Activated T-helper 2 cell treated with anti-CD3 and anti-CD28 coated beads, Interferon-gamma antibody, Interleukin-2, Interleukin-4, amounts not matched to agents 10 μg/mL and 5 μg/mL and 100 μg/mL, durations not matched to agents 14 hours and 24 hours and 36 hours (primary cell): ENCODE measurements at regions of chr17 and their contacts with region 1.

Region 1: GRCh38 chr17:35242805-35243560 is at the start of gene SLFN5:
- DNase-seq: peak; percentile 91
- H3K4me3 Mint-ChIP-seq: peak within 1 kb of the TSS; percentile 96
- H3K27ac Mint-ChIP-seq: peak within 1 kb of the TSS; percentile 96
- H3K4me1 Mint-ChIP-seq: peaks cover 63% of the 10 kb centered on the region
- H3K27me3 Mint-ChIP-seq: no peaks in the 10 kb centered on the region
- total RNA-seq, gene SLFN5: 8.8 and 9.9 TPM in 2 replicates

Region 2: GRCh38 chr17:35051183-35051578 is 191.8 kb before region 1 on chr17:
- intact Hi-C with region 1: no loop called
- DNase-seq: peak; percentile 30
- H3K4me3 Mint-ChIP-seq: peak overlapping the region; percentile 49
- H3K27ac Mint-ChIP-seq: peak overlapping the region; percentile 81
- H3K4me1 Mint-ChIP-seq: peaks cover 59% of the 10 kb centered on the region
- H3K27me3 Mint-ChIP-seq: no peaks in the 10 kb centered on the region

Region 3: DNA sequence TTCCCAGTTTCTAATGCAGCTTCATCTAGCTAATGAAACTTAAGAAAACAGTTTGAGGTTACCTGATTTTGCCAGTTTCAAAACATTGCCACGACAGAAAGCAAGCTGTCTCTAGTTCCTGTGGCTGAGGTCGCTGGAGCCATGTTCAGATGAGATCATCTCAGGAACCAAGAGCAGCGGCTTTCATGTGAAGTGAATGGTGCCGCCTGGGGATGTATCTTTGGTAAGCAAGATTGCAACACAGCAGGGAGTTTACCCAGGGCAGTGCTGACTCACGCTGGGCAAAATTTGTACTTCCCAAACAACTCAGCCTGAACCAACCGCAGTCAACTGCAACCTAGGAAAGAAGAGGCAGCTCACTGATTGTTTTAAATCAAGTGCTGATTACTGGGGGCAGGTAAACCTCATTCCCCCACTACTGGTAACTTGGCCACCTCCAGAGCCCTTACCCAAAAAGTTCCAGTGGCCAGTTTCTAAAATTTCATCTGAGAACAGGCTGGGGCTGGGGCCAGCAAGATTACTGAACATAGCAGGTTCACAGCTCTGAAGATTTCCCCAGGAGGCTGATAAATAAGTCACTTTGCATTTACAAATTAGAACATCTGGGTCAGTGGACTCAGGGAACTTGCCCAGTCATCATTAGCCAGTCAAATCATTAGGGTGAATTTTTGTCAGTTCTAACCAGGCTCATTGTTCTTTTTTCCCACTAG is 179.3 kb before region 1 on chr17 and contains the start of gene RFFL:
- intact Hi-C with region 1: loop called (anchors 10 kb)
- DNase-seq: peak; percentile 84
- H3K4me3 Mint-ChIP-seq: peak within 1 kb of the TSS; percentile 5
- H3K27ac Mint-ChIP-seq: peak within 1 kb of the TSS; percentile 75
- H3K4me1 Mint-ChIP-seq: peaks cover 49% of the 10 kb centered on the region
- H3K27me3 Mint-ChIP-seq: no peaks in the 10 kb centered on the region
- total RNA-seq, gene RFFL: 21.3 and 25.4 TPM in 2 replicates

Region 4: GRCh38 chr17:35161281-35161761 is 81.7 kb before region 1 on chr17:
- intact Hi-C with region 1: no loop called
- DNase-seq: peak; percentile 18
- H3K4me3 Mint-ChIP-seq: peak overlapping the region; percentile 10
- H3K27ac Mint-ChIP-seq: peak overlapping the region; percentile 13
- H3K4me1 Mint-ChIP-seq: peaks cover 26% of the 10 kb centered on the region
- H3K27me3 Mint-ChIP-seq: no peaks in the 10 kb centered on the region

Region 5: DNA sequence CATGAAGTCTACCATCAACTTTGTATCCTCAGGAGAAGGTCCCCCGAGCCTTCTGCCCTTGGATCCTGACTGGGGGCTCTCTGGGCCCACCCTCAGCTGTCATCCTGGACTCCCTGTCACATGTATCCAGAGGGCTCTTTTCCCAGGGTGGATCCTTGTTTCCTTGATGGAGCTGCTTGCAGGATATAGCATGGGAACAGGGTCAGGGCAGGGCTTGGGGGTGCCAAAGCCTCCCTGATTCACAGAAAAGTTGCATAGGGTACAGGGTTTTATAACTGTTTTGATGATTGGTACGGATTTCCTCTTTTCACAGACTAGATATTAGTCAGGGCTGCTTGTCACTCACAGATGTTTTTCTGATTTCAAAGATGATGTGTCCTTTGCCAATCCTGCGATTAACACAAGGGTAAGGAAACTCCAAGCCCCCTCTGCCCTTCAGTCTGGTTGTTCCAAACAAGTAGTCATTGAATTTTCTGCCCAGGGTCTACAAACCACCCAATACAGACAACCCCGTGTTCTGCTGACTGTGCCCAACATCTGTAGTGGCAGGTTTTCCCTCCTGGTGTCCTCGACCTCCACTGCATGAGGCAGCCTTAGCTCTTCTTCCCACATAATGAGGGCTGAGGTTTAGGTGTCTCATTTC is 28.2 kb before region 1 on chr17:
- intact Hi-C with region 1: loop called (anchors 1 kb)
- DNase-seq: peak; percentile 41
- H3K4me3 Mint-ChIP-seq: peak overlapping the region; percentile 67
- H3K27ac Mint-ChIP-seq: peak overlapping the region; percentile 95
- H3K4me1 Mint-ChIP-seq: peaks cover 79% of the 10 kb centered on the region
- H3K27me3 Mint-ChIP-seq: no peaks in the 10 kb centered on the region

Region 6: GRCh38 chr17:35265566-35266141 is 22.7 kb after region 1 on chr17:
- intact Hi-C with region 1: no loop called
- DNase-seq: no peak
- H3K4me3 Mint-ChIP-seq: no peak overlapping the region
- H3K27ac Mint-ChIP-seq: no peak overlapping the region
- H3K4me1 Mint-ChIP-seq: peaks cover 23% of the 10 kb centered on the region
- H3K27me3 Mint-ChIP-seq: no peaks in the 10 kb centered on the region

Region 7: DNA sequence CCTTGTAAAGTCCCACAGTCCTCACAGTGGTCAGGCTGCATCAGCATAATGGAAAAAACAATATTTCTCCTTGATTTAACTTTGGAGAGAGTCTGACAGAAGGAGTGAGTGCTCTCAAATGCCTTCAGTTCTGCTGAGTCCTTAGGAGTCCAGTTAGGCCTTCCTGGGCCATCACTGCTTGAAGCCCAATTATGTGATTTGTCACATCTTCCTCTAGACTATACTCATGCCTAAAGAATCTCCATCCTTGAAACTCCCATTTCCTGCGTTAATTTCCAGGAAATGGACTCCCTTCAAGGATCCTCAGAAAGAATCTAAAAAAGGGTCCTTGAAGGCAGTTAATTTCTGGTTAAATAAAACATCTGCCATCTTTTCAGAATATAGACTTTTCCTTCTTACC is 52.7 kb after region 1 on chr17:
- intact Hi-C with region 1: no loop called
- DNase-seq: no peak
- H3K4me3 Mint-ChIP-seq: no peak overlapping the region
- H3K27ac Mint-ChIP-seq: no peak overlapping the region
- H3K4me1 Mint-ChIP-seq: peaks cover 4% of the 10 kb centered on the region
- H3K27me3 Mint-ChIP-seq: peaks cover 41% of the 10 kb centered on the region

Region 8: GRCh38 chr17:35312790-35313711 is 70.1 kb after region 1 on chr17:
- intact Hi-C with region 1: loop called (anchors 5 kb)
- DNase-seq: peak; percentile 83
- H3K4me3 Mint-ChIP-seq: peak overlapping the region; percentile 92
- H3K27ac Mint-ChIP-seq: peak overlapping the region; percentile 94
- H3K4me1 Mint-ChIP-seq: peaks cover 46% of the 10 kb centered on the region
- H3K27me3 Mint-ChIP-seq: no peaks in the 10 kb centered on the region

Region 9: DNA sequence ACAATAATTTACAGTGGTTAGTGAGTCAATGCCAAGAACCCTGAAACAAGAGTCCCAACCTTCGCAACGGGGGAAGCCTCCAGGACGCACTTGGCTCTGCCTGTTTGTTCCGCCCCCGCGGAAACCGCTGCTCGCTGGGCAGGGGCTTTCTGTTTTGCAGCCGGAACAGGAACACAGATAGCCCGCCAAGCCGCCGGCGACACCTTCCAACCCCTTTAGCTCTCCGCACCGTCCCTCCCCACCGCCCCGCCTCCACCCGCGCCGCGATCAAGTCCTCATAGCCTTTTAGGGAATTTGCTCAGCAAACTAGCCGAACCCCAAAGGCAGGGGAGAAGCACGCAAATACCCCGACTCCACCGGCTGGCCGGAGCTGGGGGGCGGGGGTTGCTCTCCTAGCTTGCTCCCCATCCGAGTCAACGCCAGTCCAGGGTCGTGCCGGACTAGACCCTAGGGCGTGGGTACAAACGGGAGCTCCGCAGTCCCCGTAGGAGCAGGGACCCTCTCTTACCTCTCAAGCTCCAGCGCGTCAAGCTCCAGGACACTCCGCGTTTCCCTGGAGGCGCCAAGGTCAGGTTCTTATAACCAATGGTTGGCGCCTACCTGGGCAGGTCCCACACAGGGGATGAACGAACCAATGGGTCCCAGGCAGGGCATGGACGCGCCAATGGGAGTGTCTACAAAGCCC is 205.4 kb after region 1 on chr17 and contains the start of gene SLFN13:
- intact Hi-C with region 1: loop called (anchors 5 kb)
- DNase-seq: peak; percentile 83
- H3K4me3 Mint-ChIP-seq: peak within 1 kb of the TSS; percentile 65
- H3K27ac Mint-ChIP-seq: peak within 1 kb of the TSS; percentile 79
- H3K4me1 Mint-ChIP-seq: peaks cover 16% of the 10 kb centered on the region
- H3K27me3 Mint-ChIP-seq: no peaks in the 10 kb centered on the region
- total RNA-seq, gene SLFN13: 41.9 and 42.6 TPM in 2 replicates

Region 10: GRCh38 chr17:35587074-35587971 is 344.3 kb after region 1 on chr17 and contains the start of gene AP2B1:
- intact Hi-C with region 1: loop called (anchors 5 kb)
- DNase-seq: peak; percentile 96
- H3K4me3 Mint-ChIP-seq: peak within 1 kb of the TSS; percentile 94
- H3K27ac Mint-ChIP-seq: peak within 1 kb of the TSS; percentile 96
- H3K4me1 Mint-ChIP-seq: peaks cover 30% of the 10 kb centered on the region
- H3K27me3 Mint-ChIP-seq: peaks cover 7% of the 10 kb centered on the region
- total RNA-seq, gene AP2B1: 177 and 194 TPM in 2 replicates